Naive thymus-derived CD4-positive, alpha-beta T cell (primary cell): ENCODE measurements at regions of chr10 and their contacts with region 1.

Region 1: GRCh38 chr10:58372607-58373441 is 12.4 kb upstream of the TFAM start:
- DNase-seq: no peak
- ATAC-seq: no peak
- H3K4me3 ChIP-seq: no peak overlapping the region
- H3K4me3 Mint-ChIP-seq: no peak overlapping the region
- H3K27ac ChIP-seq: no peak overlapping the region
- H3K27ac Mint-ChIP-seq: no peak overlapping the region
- H3K4me1 ChIP-seq: no peaks in the 10 kb centered on the region
- H3K4me1 Mint-ChIP-seq: no peaks in the 10 kb centered on the region
- H3K27me3 ChIP-seq: no peaks in the 10 kb centered on the region
- H3K27me3 Mint-ChIP-seq: no peaks in the 10 kb centered on the region

Region 2: DNA sequence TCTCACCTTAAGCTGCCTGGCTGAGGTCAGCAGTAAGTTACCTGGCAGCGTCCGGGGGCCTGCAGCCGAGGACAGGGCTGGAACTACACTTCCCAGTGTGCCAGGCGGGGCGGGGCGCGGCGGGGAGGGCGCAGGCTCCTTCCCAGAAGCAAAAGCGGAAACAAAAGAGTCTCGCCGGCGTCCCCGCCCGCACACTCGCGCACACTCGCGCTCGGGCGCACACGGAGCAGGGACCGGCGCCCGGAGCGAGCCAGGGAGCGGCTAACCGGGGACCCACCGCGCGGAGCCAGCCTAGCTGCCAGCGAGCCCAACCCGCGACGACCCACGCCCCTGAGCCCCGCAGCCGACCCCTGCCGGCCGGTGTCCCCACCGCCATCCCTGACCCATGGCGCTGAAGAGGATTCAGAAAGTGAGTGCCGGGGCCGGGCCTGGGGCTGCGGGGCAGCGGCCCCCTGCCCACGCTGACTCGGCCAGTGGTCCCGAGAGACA is 38.0 kb before region 1 on chr10 and contains the start of gene UBE2D1:
- CTCF ChIA-PET with region 1: no interaction called
- POLR2A ChIA-PET with region 1: no interaction called
- intact Hi-C with region 1: no loop called
- DNase-seq: peak; percentile 60 to 84 (median 74)
- ATAC-seq: peak; percentile 98
- H3K4me3 ChIP-seq: peak within 1 kb of the TSS; percentile 71
- H3K4me3 Mint-ChIP-seq: peak within 1 kb of the TSS; percentile 88 to 98 (median 96)
- H3K27ac ChIP-seq: peak within 1 kb of the TSS; percentile 78
- H3K27ac Mint-ChIP-seq: peak within 1 kb of the TSS; percentile 77 to 96 (median 87)
- H3K4me1 ChIP-seq: peaks cover 0 to 15% of the 10 kb centered on the region in 2 donors
- H3K4me1 Mint-ChIP-seq: peaks cover 25 to 44% (median 38%) of the 10 kb centered on the region in 7 donors
- H3K27me3 ChIP-seq: no peaks in the 10 kb centered on the region
- H3K27me3 Mint-ChIP-seq: peaks cover 0 to 7% (median 4%) of the 10 kb centered on the region in 5 donors
- total RNA-seq, gene UBE2D1: 11.3 to 23.8 (median 12.8) TPM

Region 3: DNA sequence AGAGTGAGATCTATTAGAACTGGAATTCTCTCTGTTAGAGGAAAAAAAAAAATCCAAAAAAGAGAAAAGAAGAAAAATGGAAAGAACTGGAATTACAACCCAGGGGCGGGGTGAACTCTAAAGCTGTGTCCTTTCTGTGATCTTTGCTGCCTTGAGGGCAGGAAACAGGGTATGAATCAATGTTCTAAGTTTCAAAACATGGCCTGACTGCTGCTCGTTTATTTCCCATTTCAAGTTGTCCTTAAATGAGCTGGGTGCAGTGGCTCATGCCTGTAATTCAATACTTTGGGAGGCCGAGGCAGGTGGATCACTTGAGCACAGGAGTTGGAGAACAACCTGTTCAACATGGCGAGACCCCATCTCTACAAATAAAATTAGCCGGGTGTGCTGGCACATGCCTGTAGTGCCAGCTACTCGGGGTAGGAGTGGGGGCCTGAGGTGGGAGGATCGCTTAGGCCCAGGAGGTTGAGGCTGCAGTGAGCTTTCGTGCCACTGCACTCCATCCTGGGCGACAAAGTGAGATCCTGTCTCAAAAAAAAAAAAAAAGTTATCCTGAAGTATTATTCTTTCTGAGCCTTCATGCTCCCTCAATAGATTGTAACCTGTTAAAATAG is 12.3 kb before region 1 on chr10:
- CTCF ChIA-PET with region 1: interaction called, 3 read pairs
- POLR2A ChIA-PET with region 1: no interaction called
- intact Hi-C with region 1: loop called in 1 of 2 experiments (anchors 1 kb)
- DNase-seq: no peak
- ATAC-seq: no peak
- H3K4me3 ChIP-seq: no peak overlapping the region
- H3K4me3 Mint-ChIP-seq: peak overlapping the region in 5 of 10 donors; percentile 17 to 57 (median 28)
- H3K27ac ChIP-seq: no peak overlapping the region
- H3K27ac Mint-ChIP-seq: no peak overlapping the region
- H3K4me1 ChIP-seq: peaks cover 0 to 23% of the 10 kb centered on the region in 2 donors
- H3K4me1 Mint-ChIP-seq: peaks cover 13 to 55% (median 30%) of the 10 kb centered on the region in 7 donors
- H3K27me3 ChIP-seq: no peaks in the 10 kb centered on the region
- H3K27me3 Mint-ChIP-seq: no peaks in the 10 kb centered on the region